Activated CD8-positive, alpha-beta T cell treated with anti-CD3 and anti-CD28 coated beads, Interleukin-2, amount 10 ng/mL, durations not matched to agents 7 days and 5 days (primary cell): ENCODE measurements at regions of chr10 and their contacts with region 1.

Region 1: DNA sequence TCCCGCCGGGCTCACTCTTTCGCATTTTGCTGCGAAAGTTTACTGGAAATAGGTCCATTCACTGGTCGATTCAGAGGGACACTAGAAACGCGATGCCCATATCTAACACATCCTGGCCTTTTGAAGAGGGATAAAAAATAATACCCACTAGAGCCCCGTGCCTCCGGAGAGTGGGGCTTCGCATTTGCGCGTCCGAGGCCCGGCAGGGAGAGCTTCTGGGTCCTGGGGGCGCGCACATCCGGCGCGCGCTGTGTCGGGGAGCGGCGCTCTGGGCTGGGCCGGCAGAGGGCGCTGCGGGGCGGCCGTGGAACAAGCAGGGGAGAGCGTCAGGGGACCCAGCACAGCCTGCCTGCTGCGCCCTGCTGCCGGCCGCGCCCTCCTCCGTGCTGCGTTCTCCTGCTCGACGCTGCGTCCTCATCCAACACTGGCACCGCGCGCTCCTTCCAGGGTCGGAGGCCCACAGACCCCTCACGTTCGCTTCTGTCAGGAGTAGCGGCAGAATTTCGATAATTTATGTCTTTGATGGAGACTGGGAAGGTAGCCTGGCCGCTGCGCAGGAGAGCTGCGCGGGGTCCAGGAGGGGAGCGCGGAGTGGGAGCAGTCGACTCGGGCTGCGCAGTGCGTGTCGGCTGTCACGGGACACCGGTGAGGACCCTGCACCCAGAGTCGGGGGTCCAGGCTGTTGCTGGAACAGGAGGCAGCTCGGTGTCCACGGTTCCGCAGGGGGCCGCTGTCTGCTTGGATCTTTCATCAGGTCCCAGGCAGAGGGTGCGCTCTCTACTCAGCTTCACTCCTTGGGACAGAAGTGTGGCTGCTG is 41.5 kb upstream of the ZNF32 start:
- DNase-seq: peak; percentile 90
- ATAC-seq: peak; percentile 100
- H3K4me3 Mint-ChIP-seq: peak overlapping the region; percentile 81
- H3K27ac Mint-ChIP-seq: peak overlapping the region; percentile 80
- H3K4me1 Mint-ChIP-seq: peaks cover 11% of the 10 kb centered on the region
- H3K27me3 Mint-ChIP-seq: peaks cover 34% of the 10 kb centered on the region

Region 2: GRCh38 chr10:43606322-43607198 is 83.6 kb before region 1 on chr10 and contains the start of gene ZNF485:
- CTCF ChIA-PET with region 1: no interaction called
- POLR2A ChIA-PET with region 1: no interaction called
- DNase-seq: peak; percentile 70
- ATAC-seq: peak; percentile 88
- H3K4me3 Mint-ChIP-seq: peak within 1 kb of the TSS; percentile 77
- H3K27ac Mint-ChIP-seq: peak within 1 kb of the TSS; percentile 78
- H3K4me1 Mint-ChIP-seq: peaks cover 28% of the 10 kb centered on the region
- H3K27me3 Mint-ChIP-seq: peaks cover 5% of the 10 kb centered on the region
- total RNA-seq, gene ZNF485: 4.7 to 4.8 TPM

Region 3: GRCh38 chr10:43640603-43641002 is 49.6 kb before region 1 on chr10:
- CTCF ChIA-PET with region 1: no interaction called
- POLR2A ChIA-PET with region 1: no interaction called
- DNase-seq: no peak
- ATAC-seq: no peak
- H3K4me3 Mint-ChIP-seq: no peak overlapping the region
- H3K27ac Mint-ChIP-seq: no peak overlapping the region
- H3K4me1 Mint-ChIP-seq: no peaks in the 10 kb centered on the region
- H3K27me3 Mint-ChIP-seq: peaks cover 4% of the 10 kb centered on the region

Region 4: DNA sequence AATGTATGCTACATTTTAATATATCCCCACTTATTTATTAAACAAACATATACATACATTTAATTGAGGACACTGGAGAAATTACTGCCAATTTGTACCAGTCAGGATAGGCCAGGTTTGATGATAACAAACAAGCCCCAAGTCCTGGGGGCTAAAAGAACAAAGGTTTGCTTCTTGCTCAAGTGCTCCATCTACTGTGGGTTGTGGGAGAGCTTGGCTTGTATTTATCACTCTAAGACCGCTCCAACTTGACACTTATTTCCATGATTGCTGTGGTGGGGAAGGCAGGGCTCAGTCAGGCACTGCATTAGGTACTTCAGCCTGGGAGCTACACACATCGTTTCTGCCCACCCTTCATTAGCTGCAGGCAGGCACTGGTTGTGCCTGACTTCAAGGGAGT is 95.1 kb after region 1 on chr10:
- CTCF ChIA-PET with region 1: interaction called, 10 read pairs
- POLR2A ChIA-PET with region 1: no interaction called
- DNase-seq: no peak
- ATAC-seq: peak; percentile 36
- H3K4me3 Mint-ChIP-seq: no peak overlapping the region
- H3K27ac Mint-ChIP-seq: no peak overlapping the region
- H3K4me1 Mint-ChIP-seq: peaks cover 42% of the 10 kb centered on the region
- H3K27me3 Mint-ChIP-seq: peaks cover 7% of the 10 kb centered on the region

Region 5: GRCh38 chr10:43825421-43825820 is 135.3 kb after region 1 on chr10:
- CTCF ChIA-PET with region 1: no interaction called
- POLR2A ChIA-PET with region 1: no interaction called
- DNase-seq: no peak
- ATAC-seq: no peak
- H3K4me3 Mint-ChIP-seq: no peak overlapping the region
- H3K27ac Mint-ChIP-seq: no peak overlapping the region
- H3K4me1 Mint-ChIP-seq: peaks cover 32% of the 10 kb centered on the region
- H3K27me3 Mint-ChIP-seq: peaks cover 6% of the 10 kb centered on the region

Region 6: DNA sequence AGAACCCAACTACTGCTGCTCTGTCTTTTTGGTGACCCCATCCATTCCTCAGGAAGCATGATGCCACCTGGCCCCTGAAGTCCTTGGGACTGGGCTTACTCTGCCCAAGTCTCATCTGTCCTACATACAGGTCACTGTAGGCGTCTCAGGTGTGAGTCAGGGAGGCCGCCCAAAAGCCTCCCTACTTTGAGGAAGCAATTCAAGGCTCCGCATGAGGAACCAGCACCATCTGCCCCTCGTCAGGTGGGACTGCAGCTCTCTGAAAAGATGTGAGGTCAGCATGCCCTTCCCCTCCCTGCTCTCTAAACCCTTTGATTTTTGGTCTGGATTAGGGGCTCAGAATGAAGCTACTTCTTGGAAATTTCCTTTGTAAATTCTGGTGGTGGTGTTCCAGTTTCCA is 340.0 kb after region 1 on chr10:
- CTCF ChIA-PET with region 1: interaction called, 14 read pairs
- POLR2A ChIA-PET with region 1: interaction called, 3 read pairs
- DNase-seq: peak; percentile 56
- ATAC-seq: peak; percentile 61
- H3K4me3 Mint-ChIP-seq: no peak overlapping the region
- H3K27ac Mint-ChIP-seq: no peak overlapping the region
- H3K4me1 Mint-ChIP-seq: peaks cover 4% of the 10 kb centered on the region
- H3K27me3 Mint-ChIP-seq: peaks cover 19% of the 10 kb centered on the region